ENCODE measurements at regions of chr3 and their contacts with region 1.

Region 1: DNA sequence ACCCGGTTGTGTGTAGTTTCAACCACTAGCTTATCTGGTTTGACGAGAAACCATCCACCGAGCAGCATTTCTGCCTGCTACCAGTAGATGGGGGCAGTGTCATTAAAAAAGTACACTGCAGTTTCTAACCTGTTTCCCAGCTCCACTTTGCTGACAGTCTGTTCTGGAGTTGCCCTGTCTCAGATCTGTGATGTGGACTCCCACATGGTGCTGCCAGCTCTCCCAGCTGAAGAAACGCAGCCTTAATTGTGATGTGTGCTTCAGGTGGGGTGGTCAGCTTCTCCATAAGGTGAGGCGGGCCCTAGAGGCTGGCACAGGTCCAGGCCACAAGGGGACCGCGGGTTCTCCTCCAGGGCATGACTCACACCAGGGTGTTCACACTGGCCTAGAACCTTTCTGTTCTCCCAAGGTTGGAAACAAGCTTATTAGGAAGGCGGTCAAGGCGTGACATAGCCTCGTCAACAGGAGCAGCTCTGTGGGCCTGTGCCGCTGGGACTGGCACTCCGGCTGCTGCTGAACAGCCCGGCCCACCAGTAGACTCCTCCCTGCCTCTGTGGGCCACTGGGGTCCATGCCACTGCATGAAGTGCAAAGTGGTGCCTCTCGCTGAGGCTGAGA is 2.9 kb upstream of the FAM43A start:
- DNase-seq: peak; percentile 81
- ATAC-seq: peak; percentile 57
- H3K4me3 Mint-ChIP-seq: no peak overlapping the region
- H3K27ac Mint-ChIP-seq: no peak overlapping the region
- H3K4me1 Mint-ChIP-seq: peaks cover 40% of the 10 kb centered on the region
- H3K27me3 Mint-ChIP-seq: peaks cover 23% of the 10 kb centered on the region

Region 2: DNA sequence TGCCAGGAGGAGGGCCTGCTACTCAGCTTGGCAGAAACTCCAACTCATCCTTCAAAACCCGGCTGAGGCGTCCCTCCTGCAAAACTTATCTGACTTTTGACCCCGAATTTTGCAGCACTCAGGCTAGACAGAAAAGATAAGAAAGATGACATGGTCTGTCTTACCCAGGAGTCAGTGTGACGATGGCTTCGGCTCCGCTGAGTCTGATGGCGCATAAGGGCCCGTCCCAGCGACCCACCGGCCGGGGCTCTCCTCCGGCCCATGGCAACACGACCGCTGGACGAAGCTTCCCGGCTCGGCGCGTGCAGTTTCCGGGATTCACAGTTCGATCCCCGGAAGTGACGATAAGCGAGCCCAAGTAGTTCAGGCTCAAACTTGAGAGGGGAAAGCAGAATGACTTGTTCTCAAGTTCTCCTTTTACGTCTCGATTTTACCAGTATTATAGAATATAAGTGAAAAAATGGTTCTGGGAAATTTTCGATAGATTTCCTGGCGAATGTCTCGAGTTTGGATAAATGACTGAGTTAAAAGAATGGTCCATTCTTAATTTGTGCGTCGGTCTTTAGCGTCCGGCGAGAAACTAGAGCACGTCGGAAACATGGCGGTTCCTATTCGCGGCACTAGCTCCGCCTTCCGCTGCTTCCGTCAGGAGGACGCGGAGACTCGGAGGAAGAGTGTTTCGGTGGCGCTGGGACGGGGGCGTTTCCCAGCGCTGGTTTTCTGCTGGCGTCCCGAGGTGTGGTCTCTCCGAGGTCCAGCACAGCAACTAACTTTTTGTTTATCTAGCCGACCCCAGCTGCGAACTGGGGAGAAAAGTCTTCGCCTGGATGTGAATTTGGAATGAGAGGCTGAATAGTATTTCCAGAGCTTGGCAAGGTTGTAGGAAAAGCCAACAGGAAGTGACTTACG is 10.6 kb before region 1 on chr3 and contains the start of gene LSG1:
- CTCF ChIA-PET with region 1: interaction called, 226 read pairs
- POLR2A ChIA-PET with region 1: interaction called, 25 read pairs
- DNase-seq: peak; percentile 94
- ATAC-seq: peak; percentile 93
- H3K4me3 Mint-ChIP-seq: peak within 1 kb of the TSS; percentile 97
- H3K27ac Mint-ChIP-seq: peak within 1 kb of the TSS; percentile 97
- H3K4me1 Mint-ChIP-seq: peaks cover 27% of the 10 kb centered on the region
- H3K27me3 Mint-ChIP-seq: no peaks in the 10 kb centered on the region
- total RNA-seq, gene LSG1: 46.9 to 48.0 TPM

Region 3: DNA sequence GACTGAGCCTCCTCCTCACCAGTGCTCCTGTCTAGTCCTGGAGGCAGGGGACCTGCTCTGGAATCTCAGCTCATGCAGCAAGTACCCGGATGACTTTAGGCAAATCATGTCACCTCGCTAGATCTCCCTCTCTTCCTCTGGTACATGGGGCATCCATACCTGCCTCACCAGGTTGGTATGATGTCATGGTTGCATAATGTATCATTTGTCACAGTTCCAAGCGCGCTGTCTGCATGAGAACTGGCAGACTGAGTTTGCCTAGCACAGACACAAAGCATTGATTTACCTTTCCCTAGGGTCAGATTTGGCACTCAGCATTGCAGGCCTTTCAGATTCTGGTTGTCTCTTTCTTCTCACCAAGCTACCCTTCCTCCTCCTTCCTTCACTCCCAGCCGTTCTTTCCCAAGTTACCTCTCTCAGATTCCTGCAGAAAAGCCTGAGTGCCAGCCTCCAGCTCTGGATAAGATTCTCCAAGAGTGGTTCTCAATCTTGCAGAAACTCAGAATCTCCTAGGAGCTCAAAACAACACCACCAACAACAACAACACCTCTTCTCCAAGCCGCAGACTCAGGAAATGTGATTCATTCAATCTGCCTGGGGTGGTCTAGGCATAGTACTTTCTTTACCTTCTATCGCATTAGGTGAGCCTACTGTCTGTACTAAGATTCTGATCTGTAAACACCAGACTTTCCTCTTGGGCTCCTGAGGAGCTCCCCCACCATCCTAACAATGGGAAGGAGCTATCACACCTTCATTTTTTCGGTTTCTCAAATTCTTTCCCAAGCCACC is 32.4 kb after region 1 on chr3:
- CTCF ChIA-PET with region 1: interaction called, 16 read pairs
- POLR2A ChIA-PET with region 1: no interaction called
- DNase-seq: no peak
- ATAC-seq: peak; percentile 63
- H3K4me3 Mint-ChIP-seq: no peak overlapping the region
- H3K27ac Mint-ChIP-seq: no peak overlapping the region
- H3K4me1 Mint-ChIP-seq: peaks cover 4% of the 10 kb centered on the region
- H3K27me3 Mint-ChIP-seq: no peaks in the 10 kb centered on the region

Region 4: DNA sequence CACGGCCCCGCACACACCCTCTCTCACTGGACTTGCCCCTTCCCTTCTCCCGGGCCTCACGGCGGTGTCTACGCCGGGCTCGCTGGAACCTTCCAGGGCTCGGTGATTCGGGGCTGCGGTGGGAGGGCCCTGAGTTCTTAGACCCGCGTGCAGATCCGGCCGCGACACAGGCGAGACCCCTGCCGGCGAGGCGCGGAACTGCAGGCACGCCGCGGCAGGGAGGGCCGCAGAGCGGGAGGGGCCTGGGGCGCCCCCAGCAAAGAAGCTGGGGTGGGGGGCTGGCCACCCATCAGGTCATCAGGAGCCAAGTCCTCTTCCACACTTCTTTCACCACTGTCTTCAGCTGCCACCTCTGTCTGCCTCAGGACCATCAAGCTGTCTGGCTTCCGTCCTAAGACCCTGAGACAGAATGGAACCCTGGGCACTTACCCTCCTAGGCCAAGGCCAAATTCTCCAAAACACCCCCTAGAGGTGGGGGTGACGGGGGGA is 423.7 kb after region 1 on chr3:
- CTCF ChIA-PET with region 1: interaction called, 79 read pairs
- POLR2A ChIA-PET with region 1: no interaction called
- DNase-seq: peak; percentile 73
- ATAC-seq: peak; percentile 84
- H3K4me3 Mint-ChIP-seq: peak overlapping the region; percentile 5
- H3K27ac Mint-ChIP-seq: no peak overlapping the region
- H3K4me1 Mint-ChIP-seq: peaks cover 14% of the 10 kb centered on the region
- H3K27me3 Mint-ChIP-seq: no peaks in the 10 kb centered on the region

Region 5: GRCh38 chr3:195250473-195251251 is 567.9 kb after region 1 on chr3:
- CTCF ChIA-PET with region 1: interaction called, 20 read pairs
- POLR2A ChIA-PET with region 1: interaction called, 4 read pairs
- DNase-seq: peak; percentile 20
- ATAC-seq: no peak
- H3K4me3 Mint-ChIP-seq: no peak overlapping the region
- H3K27ac Mint-ChIP-seq: no peak overlapping the region
- H3K4me1 Mint-ChIP-seq: peaks cover 19% of the 10 kb centered on the region
- H3K27me3 Mint-ChIP-seq: no peaks in the 10 kb centered on the region

Region 6: DNA sequence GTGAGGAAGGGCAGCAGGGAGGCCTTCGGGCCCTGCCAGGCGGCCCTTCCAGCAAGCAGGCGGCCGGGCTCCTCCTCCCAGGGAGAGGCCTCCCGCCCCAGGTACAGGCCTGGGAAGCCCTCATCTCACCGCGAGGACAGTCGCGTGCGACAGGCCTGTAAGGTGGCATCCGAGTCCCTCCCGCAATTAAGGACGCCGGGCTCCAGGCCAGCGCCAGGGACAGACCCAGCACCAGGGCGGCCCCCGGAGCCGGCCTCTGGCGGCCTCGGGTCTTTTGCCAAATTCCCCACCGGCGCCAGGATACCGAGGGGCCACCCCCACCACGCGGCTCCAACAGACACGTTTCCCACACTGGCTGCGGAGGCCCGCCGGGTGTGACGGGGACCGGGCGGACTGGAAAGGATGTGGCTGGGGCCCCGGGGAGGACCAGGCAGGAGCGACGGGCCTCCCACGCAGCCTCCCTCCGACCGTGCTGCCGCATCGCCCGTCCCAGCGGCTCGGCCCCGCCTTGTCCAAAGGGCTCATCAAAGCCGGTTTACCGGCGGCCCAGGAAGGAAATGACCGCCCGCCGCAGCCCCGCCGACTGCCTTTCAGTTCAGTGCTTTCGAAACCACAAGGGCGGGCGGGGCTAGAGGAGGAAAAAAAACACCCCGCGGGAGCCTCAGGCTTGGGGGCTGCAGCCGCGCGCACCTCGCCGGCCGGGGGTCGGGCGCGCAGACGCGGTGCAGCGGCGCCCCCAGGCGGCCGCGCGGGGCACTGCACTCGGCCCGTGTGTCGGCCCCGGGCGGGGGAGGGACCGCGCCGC is 576.9 kb after region 1 on chr3:
- CTCF ChIA-PET with region 1: interaction called, 52 read pairs
- POLR2A ChIA-PET with region 1: interaction called, 5 read pairs
- DNase-seq: peak; percentile 94
- ATAC-seq: peak; percentile 80
- H3K4me3 Mint-ChIP-seq: peak overlapping the region; percentile 48
- H3K27ac Mint-ChIP-seq: no peak overlapping the region
- H3K4me1 Mint-ChIP-seq: peaks cover 38% of the 10 kb centered on the region
- H3K27me3 Mint-ChIP-seq: no peaks in the 10 kb centered on the region

Region 7: DNA sequence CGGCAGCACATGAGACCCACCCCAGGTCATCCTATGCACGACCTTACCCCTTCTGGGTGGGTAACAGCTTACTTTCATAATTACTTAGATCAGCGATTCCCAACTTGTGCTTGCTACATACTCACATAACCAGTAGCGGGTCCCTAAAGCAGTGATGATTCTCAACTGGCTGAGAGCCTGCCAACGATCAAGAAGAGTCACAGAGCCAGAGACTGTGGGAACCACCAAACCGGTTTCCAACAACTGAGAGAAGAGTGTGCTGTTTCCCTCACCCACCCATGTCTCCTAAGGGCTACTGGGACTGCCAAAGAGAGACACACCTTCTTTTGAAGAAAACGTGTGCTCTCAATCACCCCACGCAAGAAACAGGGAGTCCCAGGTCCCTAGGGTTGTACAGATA is 600.2 kb after region 1 on chr3:
- CTCF ChIA-PET with region 1: no interaction called
- POLR2A ChIA-PET with region 1: no interaction called
- DNase-seq: no peak
- ATAC-seq: no peak
- H3K4me3 Mint-ChIP-seq: no peak overlapping the region
- H3K27ac Mint-ChIP-seq: peak overlapping the region; percentile 15
- H3K4me1 Mint-ChIP-seq: no peaks in the 10 kb centered on the region
- H3K27me3 Mint-ChIP-seq: no peaks in the 10 kb centered on the region

Measured in activated CD8-positive, alpha-beta T cell treated with anti-CD3 and anti-CD28 coated beads, Interleukin-2, amount 10 ng/mL, durations not matched to agents 7 days and 5 days (primary cell).